Gastrocnemius medialis (tissue), 4 donors: ENCODE measurements at regions of chr17 and their contacts with region 1.

Region 1: DNA sequence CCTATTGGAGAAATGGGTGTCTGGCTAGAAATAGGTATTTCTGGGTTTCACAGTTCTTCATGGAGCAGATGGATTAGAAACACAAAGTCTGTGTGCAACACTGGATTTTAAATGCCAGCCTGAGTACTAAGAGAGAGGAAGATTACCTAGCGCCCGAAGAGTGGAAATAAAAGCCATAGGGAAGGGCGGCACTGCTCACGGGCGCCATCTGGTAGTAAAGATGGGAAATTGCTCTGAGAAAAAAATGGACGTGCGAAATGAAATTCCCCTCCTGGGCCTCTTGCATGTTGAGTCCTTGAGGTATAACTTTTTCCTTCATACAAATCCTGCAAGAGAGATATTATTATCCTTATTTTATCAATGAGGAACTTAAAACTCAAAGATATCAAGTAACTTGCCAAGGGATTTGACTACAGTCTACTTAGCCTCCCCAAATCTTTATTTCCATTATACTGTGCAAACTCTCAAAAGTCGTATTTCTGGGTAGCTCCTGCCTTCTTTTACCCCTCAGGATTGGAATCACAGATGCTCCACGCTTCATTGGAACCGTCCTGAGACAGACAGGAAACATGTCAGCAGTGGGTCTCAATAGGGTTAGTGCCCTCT is 72.8 kb downstream of the MMD start:
- DNase-seq: peak; percentile 7 to 25
- ATAC-seq: peak; percentile 47 to 75
- H3K4me3 ChIP-seq: no peak overlapping the region
- H3K27ac ChIP-seq: no peak overlapping the region
- H3K4me1 ChIP-seq: no peaks in the 10 kb centered on the region
- H3K27me3 ChIP-seq: no peaks in the 10 kb centered on the region
- CTCF ChIP-seq: peak; percentile 50 to 87 (median 68)
- POLR2A ChIP-seq: no peak

Region 2: DNA sequence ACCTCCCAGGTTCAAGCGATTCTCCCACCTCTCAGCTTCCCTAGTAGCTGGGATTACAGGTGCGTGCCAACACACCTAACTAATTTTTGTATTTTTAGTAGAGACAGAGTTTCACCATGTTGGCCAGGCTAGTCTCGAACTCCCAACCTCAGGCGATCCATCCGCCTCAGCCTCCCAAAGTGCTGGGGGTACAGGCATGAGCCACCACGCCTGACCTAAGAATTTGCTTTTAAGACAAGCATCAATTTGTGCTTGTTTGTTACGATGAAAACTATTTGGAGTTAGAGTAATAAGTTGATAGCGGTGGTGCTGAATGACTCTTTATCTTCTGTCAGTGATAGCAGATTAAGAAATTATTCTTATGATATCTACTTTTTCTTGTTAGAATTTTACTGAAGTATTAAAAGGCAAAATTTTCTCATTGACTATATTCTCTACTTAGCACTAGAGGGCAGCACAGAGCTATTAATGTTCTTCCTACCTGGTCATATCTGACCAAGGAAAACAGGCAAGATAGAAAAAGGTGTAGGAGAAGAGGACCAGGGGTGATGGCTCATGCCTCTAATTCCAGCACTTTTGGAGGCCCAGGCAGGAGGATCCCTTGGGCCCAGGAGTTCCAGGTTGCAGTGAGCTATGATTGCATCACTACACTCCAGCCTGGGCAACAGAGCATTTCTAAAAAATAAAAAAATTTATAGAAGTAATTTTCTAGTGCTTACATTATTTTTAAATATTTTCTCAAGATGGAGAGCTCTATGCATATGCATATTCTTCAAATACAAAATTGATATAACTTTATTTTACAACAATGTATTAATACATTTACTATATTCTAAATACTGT is 355.8 kb before region 1 on chr17:
- in situ Hi-C with region 1: loop called (anchors 5 to 25 kb)
- intact Hi-C with region 1: loop called (anchors 1 kb)
- DNase-seq: no peak
- ATAC-seq: peak; percentile 39 to 69
- H3K4me3 ChIP-seq: no peak overlapping the region
- H3K27ac ChIP-seq: no peak overlapping the region
- H3K4me1 ChIP-seq: no peaks in the 10 kb centered on the region
- H3K27me3 ChIP-seq: no peaks in the 10 kb centered on the region
- CTCF ChIP-seq: peak; percentile 37 to 69 (median 56)
- POLR2A ChIP-seq: no peak

Region 3: GRCh38 chr17:55157136-55157535 is 191.7 kb before region 1 on chr17:
- in situ Hi-C with region 1: no loop called
- intact Hi-C with region 1: no loop called
- DNase-seq: no peak
- ATAC-seq: no peak
- H3K4me3 ChIP-seq: no peak overlapping the region
- H3K27ac ChIP-seq: no peak overlapping the region
- H3K4me1 ChIP-seq: peaks cover 0 to 17% of the 10 kb centered on the region in 2 donors
- H3K27me3 ChIP-seq: no peaks in the 10 kb centered on the region
- CTCF ChIP-seq: no peak
- POLR2A ChIP-seq: no peak

Region 4: GRCh38 chr17:55273579-55274354 is 75.1 kb before region 1 on chr17:
- in situ Hi-C with region 1: no loop called
- intact Hi-C with region 1: no loop called
- DNase-seq: peak; percentile 74 to 87
- ATAC-seq: peak; percentile 76 to 91
- H3K4me3 ChIP-seq: peak overlapping the region in 3 of 4 donors; percentile 0 to 30 (median 9)
- H3K27ac ChIP-seq: peak overlapping the region; percentile 79 to 83 (median 82)
- H3K4me1 ChIP-seq: peaks cover 36 to 48% of the 10 kb centered on the region in 2 donors
- H3K27me3 ChIP-seq: no peaks in the 10 kb centered on the region
- CTCF ChIP-seq: no peak
- POLR2A ChIP-seq: no peak

Region 5: DNA sequence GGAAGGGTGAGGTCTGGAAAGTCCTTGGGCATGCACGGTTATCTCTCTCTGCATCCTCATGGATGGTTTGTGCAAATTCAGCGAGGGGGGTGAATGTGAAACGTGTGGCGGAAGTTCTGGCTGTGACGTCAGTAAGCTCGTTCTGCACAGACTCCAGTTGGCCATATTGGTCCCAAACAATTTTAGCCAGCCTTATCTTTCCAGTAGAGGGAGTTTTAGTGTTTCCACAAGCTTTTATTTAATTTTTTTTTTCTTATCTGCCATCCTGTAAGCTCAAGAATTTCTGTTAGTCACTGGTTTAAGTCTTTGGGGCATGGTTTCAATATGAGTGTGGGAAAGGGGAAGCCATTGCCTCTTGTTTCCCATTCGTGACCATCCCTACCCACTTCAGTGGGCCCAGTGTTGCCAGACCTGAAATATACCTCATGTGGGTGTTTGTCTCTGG is 45.1 kb before region 1 on chr17:
- in situ Hi-C with region 1: no loop called
- intact Hi-C with region 1: loop called (anchors 5 kb)
- DNase-seq: no peak
- ATAC-seq: no peak
- H3K4me3 ChIP-seq: no peak overlapping the region
- H3K27ac ChIP-seq: no peak overlapping the region
- H3K4me1 ChIP-seq: peaks cover 0 to 7% of the 10 kb centered on the region in 2 donors
- H3K27me3 ChIP-seq: no peaks in the 10 kb centered on the region
- CTCF ChIP-seq: no peak
- POLR2A ChIP-seq: no peak

Region 6: GRCh38 chr17:55320594-55321426 is 28.0 kb before region 1 on chr17:
- in situ Hi-C with region 1: no loop called
- intact Hi-C with region 1: loop called (anchors 2 kb)
- DNase-seq: peak; percentile 70 to 74
- ATAC-seq: peak; percentile 94 to 98
- H3K4me3 ChIP-seq: no peak overlapping the region
- H3K27ac ChIP-seq: peak overlapping the region; percentile 37 to 74 (median 58)
- H3K4me1 ChIP-seq: peaks cover 4 to 10% of the 10 kb centered on the region in 2 donors
- H3K27me3 ChIP-seq: no peaks in the 10 kb centered on the region
- CTCF ChIP-seq: no peak
- POLR2A ChIP-seq: no peak

Region 7: DNA sequence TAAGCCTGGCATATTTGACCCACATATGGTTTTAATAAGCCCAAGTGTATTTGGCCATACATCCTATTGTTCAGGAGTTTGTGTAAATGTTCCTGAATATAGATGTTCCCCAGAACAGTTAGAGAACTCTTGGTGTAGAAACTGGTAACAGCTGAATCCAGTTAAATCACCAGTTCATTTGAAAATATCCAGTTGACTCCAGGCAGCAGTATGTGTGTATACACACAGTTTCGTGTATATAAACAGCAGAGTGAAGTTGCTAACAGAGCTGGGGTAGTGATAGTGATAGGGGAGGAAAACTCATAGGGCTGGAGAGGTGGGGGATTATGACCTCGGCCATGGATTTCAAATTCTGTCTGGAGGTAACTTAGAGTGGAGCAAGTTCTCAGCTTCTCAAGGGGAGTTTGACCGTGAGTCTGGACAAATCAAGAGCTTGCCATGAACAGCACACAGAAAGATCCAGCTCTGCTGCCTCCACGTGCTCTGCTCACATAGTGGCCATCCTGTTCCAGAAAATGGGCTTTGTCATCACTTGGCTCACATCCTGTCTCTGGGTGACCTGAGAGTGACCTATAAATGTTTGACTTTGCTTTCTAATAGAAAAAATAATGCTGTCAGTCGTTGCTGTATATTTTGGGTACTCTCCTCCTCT is 103.4 kb after region 1 on chr17:
- in situ Hi-C with region 1: no loop called
- intact Hi-C with region 1: no loop called
- DNase-seq: peak; percentile 25 to 38
- ATAC-seq: peak; percentile 64 to 75
- H3K4me3 ChIP-seq: no peak overlapping the region
- H3K27ac ChIP-seq: peak overlapping the region in 3 of 4 donors; percentile 53 to 72 (median 66)
- H3K4me1 ChIP-seq: peaks cover 12 to 19% of the 10 kb centered on the region in 2 donors
- H3K27me3 ChIP-seq: no peaks in the 10 kb centered on the region
- CTCF ChIP-seq: no peak
- POLR2A ChIP-seq: no peak